ENCODE measurements at regions of chr13 and their contacts with region 1.

Region 1: DNA sequence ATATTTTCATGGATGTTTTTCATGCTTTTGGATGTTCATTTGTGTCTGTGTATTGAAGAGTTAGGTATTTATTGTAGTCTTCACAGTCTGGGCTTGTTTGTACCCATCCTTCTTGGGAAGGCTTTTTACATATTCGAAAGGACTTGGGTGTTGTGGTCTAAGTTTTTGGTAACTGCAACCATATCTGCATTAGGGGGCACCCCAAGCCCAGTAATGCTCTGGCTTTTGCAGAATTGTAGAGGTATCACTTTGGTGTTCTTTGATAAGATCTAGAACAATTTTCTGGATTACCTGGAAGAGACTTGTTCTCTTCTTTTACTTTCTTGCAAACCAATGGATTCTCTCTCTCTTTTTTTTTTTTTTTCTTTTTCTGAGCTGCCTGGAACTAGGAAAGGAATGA is 581.3 kb downstream of the DACH1 start:
- DNase-seq: no peak
- ATAC-seq: no peak
- H3K4me3 ChIP-seq: no peak overlapping the region
- H3K27ac ChIP-seq: no peak overlapping the region
- H3K4me1 ChIP-seq: peaks cover 0 to 3% (median 0%) of the 10 kb centered on the region in 9 donors
- H3K27me3 ChIP-seq: no peaks in the 10 kb centered on the region
- CTCF ChIP-seq: peak in 6 of 9 donors; percentile 27 to 56 (median 33)

Region 2: DNA sequence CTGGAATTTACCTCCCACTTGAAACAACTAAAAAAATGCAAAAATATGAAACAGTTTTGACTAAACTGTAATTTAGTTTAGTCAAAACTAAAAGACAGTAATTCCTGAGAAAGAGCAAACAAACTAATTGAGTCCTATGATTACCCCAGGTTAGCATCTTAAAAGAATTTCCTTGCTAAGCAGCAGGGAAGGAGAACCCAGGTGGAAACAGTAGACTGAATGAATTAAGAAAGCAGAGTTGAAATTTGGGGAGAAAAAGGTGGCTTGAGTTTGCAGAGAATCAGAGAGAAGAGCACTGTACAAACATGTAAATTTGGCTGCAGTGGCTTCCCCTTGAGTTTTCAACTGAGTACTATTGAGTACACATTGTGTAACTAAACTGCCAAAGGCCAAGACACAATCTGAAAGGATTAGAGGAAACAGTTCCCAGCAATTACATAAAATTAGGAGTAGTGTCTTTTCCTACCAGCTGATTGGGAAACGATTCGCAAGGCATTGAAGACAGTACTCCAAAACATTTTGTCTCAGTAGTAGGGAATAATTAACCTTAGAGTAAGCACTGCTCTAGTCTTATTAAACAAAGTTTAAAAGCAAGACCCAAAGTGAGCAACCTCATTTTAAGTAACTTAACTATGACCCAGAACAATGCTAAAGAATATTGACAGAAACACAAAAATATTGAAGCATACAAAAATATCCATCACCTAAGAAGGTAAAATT is 239.2 kb before region 1 on chr13:
- intact Hi-C with region 1: no loop called
- DNase-seq: no peak
- ATAC-seq: no peak
- H3K4me3 ChIP-seq: no peak overlapping the region
- H3K27ac ChIP-seq: no peak overlapping the region
- H3K4me1 ChIP-seq: no peaks in the 10 kb centered on the region
- H3K27me3 ChIP-seq: no peaks in the 10 kb centered on the region
- CTCF ChIP-seq: no peak

Region 3: DNA sequence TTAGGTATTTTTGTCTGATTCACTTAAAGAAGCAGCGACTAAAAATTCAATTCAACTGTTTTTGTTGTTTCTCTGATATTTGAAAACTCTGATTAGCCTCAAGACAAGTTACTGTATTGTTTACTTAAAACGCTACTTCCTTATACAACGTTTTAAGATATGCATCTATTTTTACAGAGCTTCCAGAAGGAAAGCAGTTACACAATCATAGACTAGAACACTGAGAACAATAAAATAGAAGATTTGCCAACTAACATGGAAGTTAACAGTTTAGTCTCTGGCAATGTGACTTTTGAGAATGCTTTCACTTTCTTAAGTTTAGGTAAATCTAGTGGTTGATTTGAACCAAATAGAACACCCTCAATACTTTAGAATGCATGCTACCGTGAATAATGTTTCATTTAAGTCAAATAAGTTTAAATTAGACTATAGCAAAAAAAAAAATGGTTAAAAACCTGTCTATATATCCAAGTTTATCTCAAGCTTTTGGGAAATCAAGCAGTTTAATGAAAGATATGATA is 33.5 kb before region 1 on chr13:
- intact Hi-C with region 1: loop called in 1 of 10 experiments (anchors 5 kb)
- DNase-seq: no peak
- ATAC-seq: peak in 5 of 8 donors; percentile 55 to 79 (median 69)
- H3K4me3 ChIP-seq: peak overlapping the region in 3 of 10 donors; percentile 4 to 16 (median 5)
- H3K27ac ChIP-seq: peak overlapping the region in 8 of 10 donors; percentile 16 to 76 (median 50)
- H3K4me1 ChIP-seq: peaks cover 0 to 21% (median 7%) of the 10 kb centered on the region in 9 donors
- H3K27me3 ChIP-seq: no peaks in the 10 kb centered on the region
- CTCF ChIP-seq: no peak